Dorsolateral prefrontal cortex (tissue), 120 donors: ENCODE measurements at regions of chr7 and their contacts with region 1.

Region 1: DNA sequence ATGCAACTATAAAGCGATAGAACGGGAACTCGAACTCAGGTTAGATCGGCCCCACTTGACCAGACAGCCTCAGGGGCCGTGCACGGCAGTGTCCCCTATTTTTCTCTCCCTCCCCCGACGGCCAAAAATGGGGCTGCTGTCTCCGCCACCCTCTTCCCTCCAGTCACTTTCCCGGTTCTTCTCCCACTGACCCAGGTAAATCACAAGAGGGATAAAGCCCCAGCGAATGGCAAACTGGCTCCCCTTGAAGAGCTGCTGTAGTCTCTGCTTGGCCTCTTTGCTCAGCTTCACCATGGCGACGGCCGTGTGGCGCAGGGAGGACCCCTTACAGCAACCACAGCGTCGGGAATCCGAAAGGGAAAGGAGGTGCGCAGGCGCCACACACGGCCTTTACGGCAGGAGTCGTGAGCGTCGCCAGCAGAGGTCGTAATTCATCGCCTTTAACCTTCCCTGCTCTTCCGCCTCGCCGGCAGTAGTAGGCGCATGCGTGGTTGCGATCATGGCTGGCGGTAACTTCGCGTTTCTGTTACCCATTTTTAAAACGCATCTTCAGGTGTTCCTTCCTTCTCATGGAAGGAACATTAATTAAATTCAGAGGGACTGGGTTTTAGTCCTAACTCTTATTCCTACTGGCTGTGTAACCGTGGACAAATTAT is at the start of gene TOMM7:
- DNase-seq: peak; percentile 76 to 91 (median 86)
- H3K4me3 ChIP-seq: peak within 1 kb of the TSS; percentile 67 to 99 (median 88)
- H3K27ac ChIP-seq: peak within 1 kb of the TSS in 56 of 59 donors; percentile 8 to 91 (median 76)
- H3K27me3 ChIP-seq: peaks cover 0 to 7% (median 0%) of the 10 kb centered on the region in 45 donors
- CTCF ChIP-seq: peak; percentile 31 to 95 (median 78)
- total RNA-seq, gene TOMM7: 155 to 488 (median 296) TPM

Region 2: DNA sequence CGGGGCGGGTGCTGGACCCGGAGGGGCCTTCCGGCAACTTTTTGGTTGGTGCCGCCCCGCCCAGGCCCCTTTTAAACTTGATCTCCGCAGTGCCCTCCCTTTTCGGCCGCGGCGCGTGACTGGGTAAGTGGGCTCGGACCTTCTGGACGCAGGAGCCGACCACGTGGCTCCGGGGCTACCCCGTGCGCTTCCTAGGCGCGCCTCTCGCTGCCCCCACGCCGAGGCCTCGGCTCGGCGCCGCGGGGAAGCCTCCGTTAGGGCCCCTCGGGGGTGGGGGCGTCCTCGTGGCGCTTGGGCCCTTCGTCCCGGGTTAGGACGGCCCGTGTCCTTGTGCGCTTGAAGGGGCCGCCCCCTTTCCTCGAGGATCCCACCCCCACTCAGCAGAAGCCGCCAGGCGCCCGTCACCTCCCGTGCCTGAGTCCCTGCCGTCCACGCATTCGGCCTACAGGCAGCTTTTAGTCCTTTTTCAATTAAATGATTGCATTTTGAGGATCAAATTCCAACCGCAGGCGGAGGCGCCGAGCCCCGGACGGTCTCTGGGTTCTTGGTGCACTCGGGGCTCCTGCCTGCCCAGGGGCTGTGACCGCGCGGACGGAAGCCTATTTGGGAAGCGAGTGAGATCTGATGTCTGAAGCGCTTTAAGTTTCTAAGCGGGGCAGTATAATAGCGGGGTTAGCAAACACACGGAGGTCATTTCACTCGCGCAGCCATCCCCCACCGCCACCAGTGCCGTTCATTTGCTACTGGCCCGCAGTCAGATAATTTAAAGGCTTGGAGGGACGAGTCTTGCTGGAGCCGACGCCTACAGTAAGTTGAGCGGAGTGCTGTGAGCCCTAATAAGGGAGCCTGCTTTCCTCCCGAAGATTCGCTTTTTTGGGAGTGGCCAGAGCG is 31.8 kb after region 1 on chr7:
- intact Hi-C with region 1: loop called (anchors 2 to 5 kb)
- DNase-seq: peak in 7 of 10 donors; percentile 28 to 61 (median 49)
- H3K4me3 ChIP-seq: peak overlapping the region; percentile 36 to 91 (median 74)
- H3K27ac ChIP-seq: peak overlapping the region in 45 of 59 donors; percentile 7 to 88 (median 65)
- H3K27me3 ChIP-seq: peaks cover 0 to 11% (median 0%) of the 10 kb centered on the region in 45 donors
- CTCF ChIP-seq: peak; percentile 23 to 91 (median 69)

Region 3: GRCh38 chr7:23013715-23014649 is 191.4 kb after region 1 on chr7 and contains the start of gene HYCC1:
- intact Hi-C with region 1: loop called in 1 of 2 experiments (anchors 5 kb)
- DNase-seq: peak; percentile 88 to 100 (median 99)
- H3K4me3 ChIP-seq: peak within 1 kb of the TSS; percentile 58 to 96 (median 83)
- H3K27ac ChIP-seq: peak within 1 kb of the TSS in 55 of 59 donors; percentile 4 to 89 (median 70)
- H3K27me3 ChIP-seq: no peaks in the 10 kb centered on the region
- CTCF ChIP-seq: peak; percentile 36 to 85 (median 73)
- total RNA-seq, gene HYCC1: 14.8 to 47.6 (median 26.6) TPM

Region 4: GRCh38 chr7:23055582-23056178 is 233.1 kb after region 1 on chr7:
- intact Hi-C with region 1: loop called (anchors 5 to 10 kb)
- DNase-seq: peak in 4 of 10 donors; percentile 19 to 60 (median 30)
- H3K4me3 ChIP-seq: no peak overlapping the region
- H3K27ac ChIP-seq: no peak overlapping the region
- H3K27me3 ChIP-seq: peaks cover 0 to 3% (median 0%) of the 10 kb centered on the region in 45 donors
- CTCF ChIP-seq: peak; percentile 72 to 98 (median 89)

Region 5: DNA sequence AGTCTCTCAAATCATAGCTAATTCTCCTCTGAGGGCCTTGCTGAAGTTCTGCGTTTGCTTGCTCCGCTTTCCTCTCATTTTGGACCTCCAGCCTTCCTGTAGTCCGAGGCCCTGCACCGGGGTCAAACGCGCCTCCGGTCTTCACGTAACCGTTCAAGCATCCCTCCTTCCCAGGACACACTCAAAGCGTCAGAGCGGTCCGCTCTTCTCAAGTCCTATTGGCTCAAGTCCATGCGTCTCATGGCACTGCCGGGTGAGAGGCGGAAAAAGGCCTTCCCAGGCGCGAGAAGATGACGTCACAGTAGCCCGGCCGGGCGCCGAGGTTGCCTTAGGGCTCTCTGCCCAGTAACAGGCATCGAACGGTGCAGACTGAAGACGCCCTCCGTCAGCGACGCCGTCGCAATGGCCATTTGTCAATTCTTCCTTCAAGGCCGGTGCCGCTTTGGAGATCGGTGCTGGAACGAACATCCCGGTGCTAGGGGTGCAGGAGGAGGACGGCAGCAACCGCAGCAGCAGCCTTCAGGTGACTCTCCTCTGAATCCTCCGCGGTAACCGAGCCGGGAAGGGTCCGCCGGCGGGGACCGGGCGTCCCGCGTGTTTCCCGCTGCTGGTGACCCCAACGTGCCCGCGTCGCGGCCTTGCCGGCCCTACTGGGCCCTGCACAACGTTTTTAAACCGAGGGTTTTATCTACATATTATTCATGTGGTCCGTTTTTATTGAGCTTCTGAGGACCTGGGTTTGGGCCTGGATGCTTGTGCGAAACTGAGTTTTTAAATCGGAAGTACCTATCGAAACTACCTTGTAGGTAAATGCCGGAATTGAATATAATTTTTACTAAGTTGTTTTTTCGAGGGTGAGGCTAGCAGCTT is 359.3 kb after region 1 on chr7 and contains the start of gene NUP42:
- intact Hi-C with region 1: loop called in 1 of 2 experiments (anchors 5 kb)
- DNase-seq: peak; percentile 86 to 94 (median 92)
- H3K4me3 ChIP-seq: peak within 1 kb of the TSS; percentile 64 to 100 (median 90)
- H3K27ac ChIP-seq: peak within 1 kb of the TSS; percentile 42 to 98 (median 89)
- H3K27me3 ChIP-seq: no peaks in the 10 kb centered on the region
- CTCF ChIP-seq: peak in 37 of 56 donors; percentile 13 to 59 (median 24)
- total RNA-seq, gene NUP42: 26.1 to 58.3 (median 39.5) TPM